Transverse colon (tissue), 4 donors: ENCODE measurements at regions of chr7 and their contacts with region 1.

Region 1: GRCh38 chr7:78284945-78285344 is 486.4 kb downstream of the PHTF2 start:
- DNase-seq: no peak
- H3K4me3 ChIP-seq: no peak overlapping the region
- H3K27ac ChIP-seq: no peak overlapping the region
- H3K4me1 ChIP-seq: no peaks in the 10 kb centered on the region
- H3K27me3 ChIP-seq: no peaks in the 10 kb centered on the region
- CTCF ChIP-seq: no peak
- EP300 ChIP-seq: no peak
- POLR2A ChIP-seq: no peak

Region 2: GRCh38 chr7:78039790-78040776 is 244.9 kb before region 1 on chr7:
- in situ Hi-C with region 1: no loop called
- intact Hi-C with region 1: no loop called
- DNase-seq: peak; percentile 23
- H3K4me3 ChIP-seq: no peak overlapping the region
- H3K27ac ChIP-seq: no peak overlapping the region
- H3K4me1 ChIP-seq: no peaks in the 10 kb centered on the region
- H3K27me3 ChIP-seq: no peaks in the 10 kb centered on the region
- CTCF ChIP-seq: peak; percentile 42 to 68 (median 64)
- EP300 ChIP-seq: no peak
- POLR2A ChIP-seq: no peak

Region 3: DNA sequence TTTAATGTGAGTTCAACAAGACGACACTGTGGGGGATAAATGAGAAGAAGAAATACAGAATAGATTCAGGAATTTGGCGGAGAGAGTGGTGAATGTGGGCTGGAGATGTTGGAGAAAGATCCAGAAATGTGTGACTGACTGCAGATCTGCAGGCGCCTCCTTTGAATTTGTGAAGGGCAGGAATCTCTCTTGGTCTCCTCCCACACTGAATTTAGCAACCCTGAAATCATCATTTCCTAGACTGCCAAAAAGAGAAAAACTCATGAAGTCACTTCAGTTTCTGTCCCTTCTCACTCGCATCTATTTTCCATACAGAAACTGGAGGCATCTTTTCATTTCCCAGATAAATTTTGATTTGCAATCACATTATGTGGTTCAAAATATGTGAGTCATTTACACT is 1978.4 kb after region 1 on chr7:
- in situ Hi-C with region 1: no loop called
- intact Hi-C with region 1: loop called (anchors 5 kb)
- DNase-seq: no peak
- H3K4me3 ChIP-seq: no peak overlapping the region
- H3K27ac ChIP-seq: no peak overlapping the region
- H3K4me1 ChIP-seq: no peaks in the 10 kb centered on the region
- H3K27me3 ChIP-seq: no peaks in the 10 kb centered on the region
- CTCF ChIP-seq: no peak
- EP300 ChIP-seq: no peak
- POLR2A ChIP-seq: no peak